ENCODE measurements at regions of chr12 and their contacts with region 1.

Region 1: GRCh38 chr12:87995581-87996178 is 33.5 kb downstream of the C12orf50 start:
- DNase-seq: peak; percentile 77
- ATAC-seq: peak; percentile 99
- H3K4me3 ChIP-seq: no peak overlapping the region
- H3K27ac ChIP-seq: no peak overlapping the region
- H3K4me1 ChIP-seq: peaks cover 0 to 4% of the 10 kb centered on the region in 2 experiments; a peak in 1 of 4 replicates
- H3K27me3 ChIP-seq: no peaks in the 10 kb centered on the region
- CTCF ChIP-seq: peak; percentile 59 to 89 (median 68); a peak in 5 of 6 replicates
- POLR2A ChIP-seq: no peak
- RAD21 ChIP-seq: peak; percentile 90

Region 2: GRCh38 chr12:87274594-87275245 is 721.0 kb before region 1 on chr12:
- CTCF ChIA-PET with region 1: no interaction called
- POLR2A ChIA-PET with region 1: no interaction called
- RAD21 ChIA-PET with region 1: no interaction called
- intact Hi-C with region 1: loop called (anchors 10 kb)
- DNase-seq: peak; percentile 19
- ATAC-seq: peak; percentile 77
- H3K4me3 ChIP-seq: no peak overlapping the region
- H3K27ac ChIP-seq: no peak overlapping the region
- H3K4me1 ChIP-seq: no peaks in the 10 kb centered on the region
- H3K27me3 ChIP-seq: no peaks in the 10 kb centered on the region
- CTCF ChIP-seq: peak; percentile 26 to 74 (median 67); a peak in 5 of 6 replicates
- POLR2A ChIP-seq: no peak
- RAD21 ChIP-seq: peak; percentile 50

Region 3: GRCh38 chr12:87866578-87867292 is 128.9 kb before region 1 on chr12:
- CTCF ChIA-PET with region 1: no interaction called
- POLR2A ChIA-PET with region 1: no interaction called
- RAD21 ChIA-PET with region 1: no interaction called
- intact Hi-C with region 1: loop called (anchors 5 kb)
- DNase-seq: peak; percentile 12
- ATAC-seq: peak; percentile 91
- H3K4me3 ChIP-seq: no peak overlapping the region
- H3K27ac ChIP-seq: no peak overlapping the region
- H3K4me1 ChIP-seq: no peaks in the 10 kb centered on the region
- H3K27me3 ChIP-seq: no peaks in the 10 kb centered on the region
- CTCF ChIP-seq: peak; percentile 32 to 74 (median 66); a peak in 5 of 6 replicates
- POLR2A ChIP-seq: no peak
- RAD21 ChIP-seq: peak; percentile 51; the same call in 1 of the 2 replicates

Region 4: GRCh38 chr12:88052686-88053085 is 57.0 kb after region 1 on chr12:
- CTCF ChIA-PET with region 1: no interaction called
- POLR2A ChIA-PET with region 1: no interaction called
- RAD21 ChIA-PET with region 1: no interaction called
- intact Hi-C with region 1: loop called (anchors 2 kb)
- DNase-seq: peak; percentile 27
- ATAC-seq: peak; percentile 93
- H3K4me3 ChIP-seq: no peak overlapping the region
- H3K27ac ChIP-seq: no peak overlapping the region
- H3K4me1 ChIP-seq: no peaks in the 10 kb centered on the region
- H3K27me3 ChIP-seq: no peaks in the 10 kb centered on the region
- CTCF ChIP-seq: peak; percentile 29 to 71 (median 65); a peak in 5 of 6 replicates
- POLR2A ChIP-seq: no peak
- RAD21 ChIP-seq: peak; percentile 73